ENCODE measurements at regions of chr13 and their contacts with region 1.

Region 1: DNA sequence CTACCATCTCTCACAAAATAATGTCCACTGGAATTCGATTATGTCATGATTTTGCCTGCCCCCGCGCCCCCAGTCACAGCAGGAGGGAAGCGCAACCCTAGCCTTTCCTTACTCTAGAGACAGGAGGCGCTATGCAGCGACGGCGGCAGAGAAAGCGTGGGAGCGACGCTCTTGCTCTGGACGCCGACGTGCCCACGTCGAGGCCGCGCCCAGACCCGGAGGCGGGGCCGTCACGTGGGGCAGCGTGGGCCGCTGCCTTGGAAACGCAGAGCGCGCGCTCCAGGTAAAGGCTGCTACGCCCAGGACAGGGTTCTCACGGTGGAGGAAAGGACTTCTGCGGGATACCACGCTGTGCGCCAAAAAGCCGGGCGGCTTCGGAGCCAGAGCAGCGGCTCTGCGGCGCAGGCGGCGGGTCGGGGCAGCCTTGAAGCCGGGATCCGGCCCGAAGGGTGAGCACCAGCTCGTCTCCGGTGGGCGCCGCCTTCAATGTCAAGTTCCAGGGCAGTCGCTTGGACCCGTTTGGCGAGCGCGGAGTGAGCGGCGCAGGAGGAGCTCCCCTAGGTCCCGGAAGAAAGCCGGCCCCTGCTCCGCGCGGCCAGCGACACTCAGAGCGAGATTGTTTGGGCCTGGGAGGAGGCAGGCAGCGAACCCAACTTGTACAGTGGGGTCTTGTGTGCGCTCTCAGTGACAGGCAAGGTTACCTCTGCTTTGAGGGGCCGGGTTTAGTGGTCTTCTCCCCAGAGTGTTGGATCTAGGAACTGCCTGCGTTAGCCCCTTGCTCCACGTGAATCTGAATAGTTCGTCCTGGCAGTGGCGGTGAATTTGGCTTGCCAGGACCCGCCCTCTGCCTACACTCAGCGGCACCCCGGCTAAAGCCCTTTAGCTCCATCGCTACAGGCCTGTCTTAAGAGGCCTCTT is 121.7 kb downstream of the MRPL57 start:
- DNase-seq: peak; percentile 89
- H3K4me3 Mint-ChIP-seq: peak overlapping the region; percentile 90
- H3K27ac Mint-ChIP-seq: peak overlapping the region; percentile 70
- H3K4me1 Mint-ChIP-seq: peaks cover 22% of the 10 kb centered on the region
- H3K27me3 Mint-ChIP-seq: no peaks in the 10 kb centered on the region

Region 2: GRCh38 chr13:20769091-20769490 is 529.1 kb before region 1 on chr13:
- CTCF ChIA-PET with region 1: no interaction called
- DNase-seq: no peak
- H3K4me3 Mint-ChIP-seq: no peak overlapping the region
- H3K27ac Mint-ChIP-seq: no peak overlapping the region
- H3K4me1 Mint-ChIP-seq: peaks cover 28% of the 10 kb centered on the region
- H3K27me3 Mint-ChIP-seq: no peaks in the 10 kb centered on the region

Region 3: DNA sequence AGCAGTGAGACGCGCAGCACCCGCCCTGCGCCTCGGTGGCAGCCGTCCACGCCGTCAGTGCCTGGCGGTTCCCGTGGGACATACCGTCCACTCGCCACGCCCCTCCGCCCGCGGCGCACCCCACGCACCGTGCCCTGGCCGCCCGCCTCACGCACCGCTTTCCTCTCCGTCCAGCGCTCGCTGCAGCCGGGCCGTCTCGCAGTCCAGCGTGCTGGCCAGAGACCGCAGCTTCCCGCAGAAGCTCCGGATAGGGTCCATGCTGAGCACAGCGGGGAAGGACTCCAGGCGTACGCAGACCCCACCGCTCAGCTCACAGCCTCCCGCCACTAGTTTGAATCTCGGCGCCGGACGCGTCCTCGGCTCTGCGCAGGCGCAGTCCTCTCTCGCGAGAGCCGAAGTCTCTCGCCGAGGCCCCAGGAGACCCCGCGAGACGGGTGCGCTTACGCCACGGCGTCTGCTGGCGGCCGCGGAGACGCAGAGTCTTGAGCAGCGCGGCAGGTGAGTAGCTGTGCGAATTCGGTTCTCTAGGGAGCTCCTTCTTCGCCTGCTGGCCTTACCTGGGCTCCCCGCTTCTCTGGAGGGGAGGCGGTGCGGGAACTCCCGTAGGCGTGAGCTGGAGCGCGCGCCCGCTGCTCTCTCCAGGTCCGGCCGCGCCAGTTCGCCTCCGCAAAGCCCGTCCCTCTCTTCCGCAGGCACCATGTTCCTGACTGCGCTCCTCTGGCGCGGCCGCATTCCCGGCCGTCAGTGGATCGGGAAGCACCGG is 121.8 kb before region 1 on chr13 and contains the starts of genes MRPL57 and SKA3:
- CTCF ChIA-PET with region 1: interaction called, 13 read pairs
- DNase-seq: peak; percentile 95
- H3K4me3 Mint-ChIP-seq: peak within 1 kb of the TSS; percentile 97
- H3K27ac Mint-ChIP-seq: peak within 1 kb of the TSS; percentile 96
- H3K4me1 Mint-ChIP-seq: peaks cover 38% of the 10 kb centered on the region
- H3K27me3 Mint-ChIP-seq: peaks cover 6% of the 10 kb centered on the region

Region 4: DNA sequence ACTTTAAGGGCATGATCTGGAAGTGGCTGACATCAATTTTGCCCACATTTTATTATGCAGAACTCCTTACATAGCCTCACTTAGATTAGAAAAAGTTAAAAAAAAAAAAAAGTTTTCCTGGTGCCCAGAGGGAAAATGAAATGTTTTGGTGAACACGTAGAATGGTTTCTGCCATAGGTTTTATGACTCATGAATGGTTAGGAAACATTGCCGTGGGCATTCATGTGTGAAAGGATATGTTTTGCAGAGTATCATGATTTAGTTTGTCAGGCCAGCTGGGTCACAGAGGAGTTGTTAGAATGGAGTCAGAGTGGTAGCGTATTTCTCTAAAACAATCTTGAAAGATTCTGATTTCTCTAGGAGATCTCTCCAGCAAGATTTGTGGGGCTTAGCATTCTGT is 12.0 kb after region 1 on chr13:
- CTCF ChIA-PET with region 1: interaction called, 18 read pairs
- DNase-seq: no peak
- H3K4me3 Mint-ChIP-seq: no peak overlapping the region
- H3K27ac Mint-ChIP-seq: no peak overlapping the region
- H3K4me1 Mint-ChIP-seq: no peaks in the 10 kb centered on the region
- H3K27me3 Mint-ChIP-seq: no peaks in the 10 kb centered on the region

Region 5: DNA sequence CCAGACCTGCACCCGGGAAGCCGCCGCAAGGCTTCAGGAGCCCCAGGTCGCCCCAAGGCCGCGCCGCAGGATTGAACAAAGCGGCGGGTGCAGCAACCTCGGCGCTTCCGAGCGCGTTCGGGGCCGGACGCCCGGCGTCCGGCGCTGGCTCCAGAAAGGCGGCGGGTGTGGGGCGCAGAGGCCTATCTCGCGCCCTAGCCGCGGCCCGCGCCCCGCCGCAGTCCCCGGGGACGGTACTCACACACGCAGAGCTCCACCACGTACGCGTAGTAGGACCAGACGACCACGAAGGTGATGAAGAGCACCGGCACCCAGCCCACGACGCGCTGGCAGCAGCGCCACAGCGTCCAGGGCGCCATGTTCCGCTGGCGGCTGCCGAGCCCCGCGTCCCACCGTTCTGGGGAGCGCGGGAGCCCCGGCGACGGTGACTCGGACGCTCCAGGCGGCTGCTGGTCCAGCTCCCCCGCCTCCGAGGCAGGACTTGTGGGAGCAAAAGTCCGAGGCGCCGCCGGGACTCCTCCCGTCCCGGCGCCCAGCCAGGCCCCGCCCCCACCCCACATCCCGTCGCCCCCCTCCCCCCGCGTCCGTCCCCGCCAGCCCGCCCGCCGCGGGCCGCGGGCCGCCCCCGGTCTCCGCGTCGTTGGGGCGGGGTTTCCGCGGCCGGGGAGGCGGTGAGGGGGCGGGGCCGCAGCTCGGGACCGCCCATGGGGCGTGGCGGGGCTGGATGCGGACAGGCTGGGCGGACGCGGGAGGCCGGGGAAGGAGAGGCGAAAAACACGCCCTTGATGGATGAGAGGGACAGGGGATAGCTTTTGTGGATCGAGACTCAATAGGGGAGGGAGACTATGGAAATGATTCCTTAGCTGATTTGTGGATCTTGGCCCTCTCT is 160.9 kb after region 1 on chr13 and contains the start of gene ZDHHC20:
- CTCF ChIA-PET with region 1: interaction called, 18 read pairs
- DNase-seq: peak; percentile 90
- H3K4me3 Mint-ChIP-seq: peak within 1 kb of the TSS; percentile 94
- H3K27ac Mint-ChIP-seq: peak within 1 kb of the TSS; percentile 93
- H3K4me1 Mint-ChIP-seq: peaks cover 45% of the 10 kb centered on the region
- H3K27me3 Mint-ChIP-seq: peaks cover 4% of the 10 kb centered on the region

Measured in activated naive CD4-positive, alpha-beta T cell treated with anti-CD3 and anti-CD28 coated beads, Interleukin-2, amount 10 ng/mL, durations not matched to agents 7 days and 5 days (primary cell).